Head of caudate nucleus (tissue), 42 donors: ENCODE measurements at regions of chr19 and their contacts with region 1.

Region 1: DNA sequence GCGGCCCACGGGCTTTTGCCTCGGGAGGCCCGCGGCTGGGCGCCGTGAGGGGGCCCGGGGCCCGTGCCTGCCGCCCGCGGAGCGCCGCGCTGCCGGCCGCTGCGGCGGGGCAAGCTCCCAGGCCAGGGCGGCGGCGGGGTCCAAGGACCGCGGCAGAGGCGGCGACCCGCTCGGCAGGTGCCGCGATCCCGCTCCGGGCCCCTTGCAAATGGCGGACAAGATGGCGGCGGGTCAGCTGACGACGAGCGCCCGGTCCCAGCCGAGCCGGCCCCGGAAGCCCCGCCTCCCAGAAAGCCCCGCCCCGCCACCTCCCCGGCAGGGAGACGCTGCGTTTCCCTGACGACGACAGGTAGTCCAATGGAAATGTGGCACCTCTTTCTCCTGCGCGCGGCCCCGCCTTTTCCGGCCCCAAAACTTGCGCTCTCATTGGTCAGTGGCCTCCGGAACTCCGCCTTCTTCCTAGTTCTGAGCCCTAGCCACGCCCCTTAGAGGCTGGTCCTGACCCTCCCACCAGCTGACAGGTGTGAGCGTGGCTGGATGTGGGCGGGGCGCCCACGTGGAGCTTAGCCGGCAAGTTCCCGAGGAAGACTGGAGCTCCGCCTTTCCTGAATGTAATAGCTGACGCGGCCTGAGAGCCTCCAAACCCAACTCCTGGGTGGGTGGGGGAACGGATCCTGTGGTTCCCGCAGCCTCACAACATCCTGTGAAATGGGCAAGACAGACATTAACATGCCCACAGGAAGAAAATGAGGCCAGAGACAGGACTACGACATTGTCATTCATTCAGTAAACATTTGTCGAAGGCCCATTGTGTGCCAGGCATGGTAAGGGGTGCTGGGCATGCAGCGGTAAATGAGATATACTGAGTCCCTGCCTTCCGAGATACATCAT is at the start of gene AP3D1:
- DNase-seq: peak; percentile 97 to 100 (median 99)

Region 2: GRCh38 chr19:2101417-2102335 is 49.9 kb before region 1 on chr19:
- intact Hi-C with region 1: loop called (anchors 5 kb)
- DNase-seq: peak in 37 of 42 donors; percentile 28 to 86 (median 60)

Region 3: GRCh38 chr19:4042731-4043082 is 1891.1 kb after region 1 on chr19:
- intact Hi-C with region 1: no loop called
- DNase-seq: no peak